Heart left ventricle (tissue), 16 donors: ENCODE measurements at regions of chr10 and their contacts with region 1.

Region 1: DNA sequence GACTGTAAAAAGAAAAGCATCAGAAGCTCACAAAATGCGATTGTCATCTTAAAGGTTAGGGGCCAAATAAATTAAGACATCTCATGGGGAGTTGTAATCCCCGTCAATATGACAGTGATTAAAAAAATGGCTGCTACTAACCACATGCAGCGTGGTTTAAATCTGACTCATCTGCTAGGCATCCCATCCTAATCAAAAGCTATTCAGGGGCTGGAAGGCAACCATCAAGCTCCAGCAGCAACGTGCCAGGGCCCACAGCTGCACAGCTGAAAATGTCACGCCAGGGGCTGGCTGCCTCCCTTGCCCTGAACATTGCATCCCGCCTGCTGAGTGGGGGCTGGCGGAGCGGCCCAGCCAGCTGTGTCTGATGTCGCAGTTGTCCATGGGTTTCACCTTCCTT is 66.3 kb upstream of the FRMD4A start:
- DNase-seq: peak; percentile 66 to 83 (median 81)
- ATAC-seq: peak; percentile 93 to 99 (median 98)
- H3K4me3 ChIP-seq: no peak overlapping the region
- H3K27ac ChIP-seq: peak overlapping the region in 4 of 12 donors; percentile 19 to 59 (median 49)
- H3K4me1 ChIP-seq: peaks cover 0 to 12% (median 2%) of the 10 kb centered on the region in 12 donors
- H3K27me3 ChIP-seq: no peaks in the 10 kb centered on the region
- CTCF ChIP-seq: no peak
- POLR2A ChIP-seq: no peak

Region 2: GRCh38 chr10:13990946-13991345 is 406.1 kb before region 1 on chr10:
- intact Hi-C with region 1: no loop called
- DNase-seq: peak in 2 of 5 donors; percentile 31
- ATAC-seq: peak; percentile 27 to 53 (median 40)
- H3K4me3 ChIP-seq: peak overlapping the region in 7 of 12 donors; percentile 3 to 39 (median 24)
- H3K27ac ChIP-seq: peak overlapping the region; percentile 59 to 89 (median 80)
- H3K4me1 ChIP-seq: peaks cover 0 to 60% (median 35%) of the 10 kb centered on the region in 12 donors
- H3K27me3 ChIP-seq: no peaks in the 10 kb centered on the region
- CTCF ChIP-seq: no peak
- POLR2A ChIP-seq: no peak

Region 3: GRCh38 chr10:14450041-14450491 is 53.0 kb after region 1 on chr10:
- intact Hi-C with region 1: loop called in 1 of 10 experiments (anchors 2 kb)
- DNase-seq: peak; percentile 23 to 78 (median 70)
- ATAC-seq: peak in 3 of 4 donors; percentile 89 to 90 (median 90)
- H3K4me3 ChIP-seq: no peak overlapping the region
- H3K27ac ChIP-seq: peak overlapping the region in 9 of 12 donors; percentile 21 to 77 (median 51)
- H3K4me1 ChIP-seq: peaks cover 0 to 12% (median 1%) of the 10 kb centered on the region in 12 donors
- H3K27me3 ChIP-seq: no peaks in the 10 kb centered on the region
- CTCF ChIP-seq: no peak
- POLR2A ChIP-seq: no peak